Activated CD8-positive, alpha-beta T cell treated with anti-CD3 and anti-CD28 coated beads, Interleukin-2, amount 10 ng/mL, durations not matched to agents 7 days and 5 days (primary cell): ENCODE measurements at regions of chr16 and their contacts with region 1.

Region 1: GRCh38 chr16:27235055-27235937 is 32.0 kb downstream of the KDM8 start:
- DNase-seq: peak; percentile 97
- ATAC-seq: peak; percentile 63
- H3K4me3 Mint-ChIP-seq: peak overlapping the region; percentile 77
- H3K27ac Mint-ChIP-seq: peak overlapping the region; percentile 99
- H3K4me1 Mint-ChIP-seq: peaks cover 99% of the 10 kb centered on the region
- H3K27me3 Mint-ChIP-seq: no peaks in the 10 kb centered on the region

Region 2: GRCh38 chr16:26951947-26952346 is 283.3 kb before region 1 on chr16:
- CTCF ChIA-PET with region 1: no interaction called
- POLR2A ChIA-PET with region 1: no interaction called
- DNase-seq: no peak
- ATAC-seq: no peak
- H3K4me3 Mint-ChIP-seq: no peak overlapping the region
- H3K27ac Mint-ChIP-seq: no peak overlapping the region
- H3K4me1 Mint-ChIP-seq: no peaks in the 10 kb centered on the region
- H3K27me3 Mint-ChIP-seq: no peaks in the 10 kb centered on the region

Region 3: DNA sequence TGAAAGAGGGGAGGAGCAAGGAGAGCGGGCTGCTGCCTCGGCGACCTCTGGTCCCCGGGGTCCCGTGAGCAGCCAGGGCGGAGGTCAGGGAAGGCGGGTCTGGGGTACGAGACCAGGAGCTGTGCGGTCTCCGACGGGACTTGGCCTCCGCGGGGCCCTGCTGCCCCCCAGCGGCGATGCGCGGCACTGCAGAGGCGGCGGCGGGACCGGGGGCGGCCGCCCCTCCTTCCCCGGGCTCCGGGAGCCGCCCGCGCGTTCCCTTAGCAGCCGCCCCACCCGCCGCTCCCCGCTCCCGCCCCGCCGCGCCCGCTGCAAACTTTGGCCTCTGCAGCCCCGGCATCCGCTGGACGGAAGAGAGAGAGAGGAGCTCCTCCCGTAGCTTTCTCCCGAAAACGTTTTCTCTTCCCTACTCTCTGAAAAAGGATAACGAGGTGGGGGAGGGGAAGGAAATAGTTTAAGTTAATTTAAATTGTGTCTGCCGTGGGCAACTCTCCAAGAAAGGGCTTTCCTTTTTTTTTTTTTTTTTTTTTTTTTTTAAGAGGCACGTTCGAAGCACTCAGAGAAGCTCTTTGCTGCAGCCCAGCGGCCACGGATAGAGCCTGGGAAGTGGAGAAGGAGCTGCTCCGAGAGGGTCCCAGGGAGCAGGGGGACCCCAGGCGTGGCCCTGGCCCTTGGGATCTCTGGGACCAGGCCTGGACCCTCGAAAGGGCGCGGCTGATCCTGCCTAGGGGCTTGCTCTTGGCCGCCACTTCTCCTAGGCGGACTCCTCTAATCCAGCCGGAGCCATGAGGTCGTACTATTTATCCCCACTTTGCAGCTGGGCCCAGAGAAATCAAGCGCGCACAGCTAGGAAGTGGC is 125.4 kb before region 1 on chr16:
- CTCF ChIA-PET with region 1: no interaction called
- POLR2A ChIA-PET with region 1: no interaction called
- DNase-seq: peak; percentile 80
- ATAC-seq: peak; percentile 93
- H3K4me3 Mint-ChIP-seq: peak overlapping the region; percentile 51
- H3K27ac Mint-ChIP-seq: no peak overlapping the region
- H3K4me1 Mint-ChIP-seq: peaks cover 6% of the 10 kb centered on the region
- H3K27me3 Mint-ChIP-seq: peaks cover 3% of the 10 kb centered on the region

Region 4: GRCh38 chr16:27169511-27170071 is 65.7 kb before region 1 on chr16:
- CTCF ChIA-PET with region 1: interaction called, 18 read pairs
- POLR2A ChIA-PET with region 1: interaction called, 7 read pairs
- DNase-seq: peak; percentile 84
- ATAC-seq: peak; percentile 86
- H3K4me3 Mint-ChIP-seq: peak overlapping the region; percentile 15
- H3K27ac Mint-ChIP-seq: peak overlapping the region; percentile 72
- H3K4me1 Mint-ChIP-seq: peaks cover 58% of the 10 kb centered on the region
- H3K27me3 Mint-ChIP-seq: peaks cover 4% of the 10 kb centered on the region

Region 5: GRCh38 chr16:27222249-27223225 is 12.8 kb before region 1 on chr16:
- CTCF ChIA-PET with region 1: interaction called, 13 read pairs
- POLR2A ChIA-PET with region 1: interaction called, 5 read pairs
- DNase-seq: no peak
- ATAC-seq: no peak
- H3K4me3 Mint-ChIP-seq: no peak overlapping the region
- H3K27ac Mint-ChIP-seq: peak overlapping the region; percentile 34
- H3K4me1 Mint-ChIP-seq: peaks cover 19% of the 10 kb centered on the region
- H3K27me3 Mint-ChIP-seq: no peaks in the 10 kb centered on the region

Region 6: GRCh38 chr16:27268376-27269299 is 33.3 kb after region 1 on chr16 and contains the start of gene NSMCE1:
- CTCF ChIA-PET with region 1: interaction called, 40 read pairs
- POLR2A ChIA-PET with region 1: interaction called, 31 read pairs
- DNase-seq: peak; percentile 98
- ATAC-seq: peak; percentile 99
- H3K4me3 Mint-ChIP-seq: peak within 1 kb of the TSS; percentile 98
- H3K27ac Mint-ChIP-seq: peak within 1 kb of the TSS; percentile 99
- H3K4me1 Mint-ChIP-seq: peaks cover 80% of the 10 kb centered on the region
- H3K27me3 Mint-ChIP-seq: no peaks in the 10 kb centered on the region
- total RNA-seq, gene NSMCE1: 87.3 to 94.9 TPM

Region 7: GRCh38 chr16:27318392-27319226 is 83.3 kb after region 1 on chr16:
- CTCF ChIA-PET with region 1: interaction called, 101 read pairs
- POLR2A ChIA-PET with region 1: interaction called, 222 read pairs
- DNase-seq: peak; percentile 80
- ATAC-seq: peak; percentile 67
- H3K4me3 Mint-ChIP-seq: peak overlapping the region; percentile 90
- H3K27ac Mint-ChIP-seq: peak overlapping the region; percentile 93
- H3K4me1 Mint-ChIP-seq: peaks cover 81% of the 10 kb centered on the region
- H3K27me3 Mint-ChIP-seq: no peaks in the 10 kb centered on the region

Region 8: GRCh38 chr16:27374804-27375425 is 139.6 kb after region 1 on chr16:
- CTCF ChIA-PET with region 1: interaction called, 153 read pairs
- POLR2A ChIA-PET with region 1: interaction called, 7 read pairs
- DNase-seq: peak; percentile 61
- ATAC-seq: peak; percentile 47
- H3K4me3 Mint-ChIP-seq: no peak overlapping the region
- H3K27ac Mint-ChIP-seq: no peak overlapping the region
- H3K4me1 Mint-ChIP-seq: peaks cover 45% of the 10 kb centered on the region
- H3K27me3 Mint-ChIP-seq: no peaks in the 10 kb centered on the region

Region 9: GRCh38 chr16:27449434-27450195 is 214.3 kb after region 1 on chr16:
- CTCF ChIA-PET with region 1: interaction called, 37 read pairs
- POLR2A ChIA-PET with region 1: interaction called, 7 read pairs
- DNase-seq: peak; percentile 88
- ATAC-seq: peak; percentile 71
- H3K4me3 Mint-ChIP-seq: peak overlapping the region; percentile 72
- H3K27ac Mint-ChIP-seq: peak overlapping the region; percentile 95
- H3K4me1 Mint-ChIP-seq: peaks cover 71% of the 10 kb centered on the region
- H3K27me3 Mint-ChIP-seq: no peaks in the 10 kb centered on the region